GM12878 (cell line): ENCODE measurements at regions of chr1 and their contacts with region 1.

Region 1: GRCh38 chr1:38291906-38292521 is 245.4 kb upstream of the POU3F1 start:
- DNase-seq: no peak
- ATAC-seq: no peak
- H3K4me3 ChIP-seq: no peak overlapping the region
- H3K27ac ChIP-seq: no peak overlapping the region
- H3K4me1 ChIP-seq: no peaks in the 10 kb centered on the region
- H3K27me3 ChIP-seq: peaks cover 0 to 3% of the 10 kb centered on the region in 2 experiments; a peak in 3 of 4 replicates
- CTCF ChIP-seq: no peak
- EP300 ChIP-seq: no peak
- POLR2A ChIP-seq: no peak
- RAD21 ChIP-seq: no peak

Region 2: GRCh38 chr1:38243106-38243505 is 48.9 kb before region 1 on chr1:
- CTCF ChIA-PET with region 1: no interaction called
- POLR2A ChIA-PET with region 1: no interaction called
- RAD21 ChIA-PET with region 1: no interaction called
- SMC1A ChIA-PET with region 1: no interaction called
- in situ Hi-C with region 1: loop called (anchors 5 kb)
- intact Hi-C with region 1: no loop called
- DNase-seq: no peak
- ATAC-seq: no peak
- H3K4me3 ChIP-seq: no peak overlapping the region
- H3K27ac ChIP-seq: no peak overlapping the region
- H3K4me1 ChIP-seq: no peaks in the 10 kb centered on the region
- H3K27me3 ChIP-seq: peaks cover 2 to 3% of the 10 kb centered on the region in 2 experiments; a peak in 1 of 4 replicates
- CTCF ChIP-seq: no peak
- EP300 ChIP-seq: no peak
- POLR2A ChIP-seq: no peak
- RAD21 ChIP-seq: no peak